B cell (primary cell): ENCODE measurements at regions of chr19 and their contacts with region 1.

Region 1: DNA sequence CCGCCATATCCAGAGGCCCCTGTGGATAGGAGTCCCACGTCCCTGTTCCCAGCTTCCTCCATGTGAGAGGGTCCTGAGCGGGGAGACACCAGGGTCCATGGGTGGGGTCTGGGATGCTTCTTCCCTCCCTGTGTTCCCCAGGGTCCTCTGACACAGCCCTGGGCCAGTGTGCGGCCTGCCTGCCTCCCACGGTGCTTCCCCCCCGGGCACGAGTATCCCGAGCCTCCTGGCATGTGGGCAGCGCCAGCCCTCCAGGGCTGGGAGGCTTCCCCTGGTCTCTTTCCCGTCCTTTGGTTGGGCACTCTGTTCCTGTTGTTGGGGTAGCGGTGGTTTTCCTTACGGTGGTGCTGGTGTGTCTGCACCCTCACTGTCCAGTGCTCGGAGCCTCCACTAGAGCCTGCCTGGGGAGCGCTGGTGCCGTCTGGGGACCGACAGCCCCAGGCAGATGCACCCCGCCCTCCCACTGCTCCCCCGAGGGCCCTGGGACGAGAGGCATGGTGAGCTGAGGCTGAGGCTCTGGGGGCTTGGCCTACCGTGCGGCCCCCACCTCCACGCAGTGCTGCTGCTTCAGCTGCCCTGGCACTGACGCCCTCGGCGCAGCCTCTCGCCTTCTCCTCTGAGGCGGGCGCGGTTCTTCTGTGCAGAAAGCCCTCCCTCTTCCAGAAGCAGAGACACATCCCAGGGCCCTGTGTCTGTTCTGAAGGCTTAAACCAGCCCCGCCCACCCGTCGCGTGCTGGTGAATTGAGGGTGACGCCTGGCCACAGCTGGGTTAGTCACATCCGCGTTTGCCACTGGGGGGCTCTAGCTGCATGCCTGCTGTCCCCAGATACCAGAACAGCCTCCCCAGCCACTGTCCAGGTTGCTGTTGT is 27.9 kb downstream of the PLEKHJ1 start:
- DNase-seq: peak; percentile 55
- ATAC-seq: peak; percentile 78
- H3K4me3 ChIP-seq: no peak overlapping the region
- H3K4me3 Mint-ChIP-seq: no peak overlapping the region
- H3K27ac ChIP-seq: no peak overlapping the region
- H3K27ac Mint-ChIP-seq: no peak overlapping the region
- H3K4me1 ChIP-seq: peaks cover 0 to 6% of the 10 kb centered on the region in 2 donors
- H3K4me1 Mint-ChIP-seq: peaks cover 5% of the 10 kb centered on the region
- H3K27me3 ChIP-seq: no peaks in the 10 kb centered on the region
- H3K27me3 Mint-ChIP-seq: no peaks in the 10 kb centered on the region
- CTCF ChIP-seq: no peak

Region 2: GRCh38 chr19:1987197-1988187 is 220.7 kb before region 1 on chr19:
- CTCF ChIA-PET with region 1: no interaction called
- POLR2A ChIA-PET with region 1: interaction called, 10 read pairs
- intact Hi-C with region 1: no loop called
- DNase-seq: no peak
- ATAC-seq: no peak
- H3K4me3 ChIP-seq: no peak overlapping the region
- H3K4me3 Mint-ChIP-seq: no peak overlapping the region
- H3K27ac ChIP-seq: no peak overlapping the region
- H3K27ac Mint-ChIP-seq: no peak overlapping the region
- H3K4me1 ChIP-seq: no peaks in the 10 kb centered on the region
- H3K4me1 Mint-ChIP-seq: no peaks in the 10 kb centered on the region
- H3K27me3 ChIP-seq: no peaks in the 10 kb centered on the region
- H3K27me3 Mint-ChIP-seq: no peaks in the 10 kb centered on the region
- CTCF ChIP-seq: no peak

Region 3: DNA sequence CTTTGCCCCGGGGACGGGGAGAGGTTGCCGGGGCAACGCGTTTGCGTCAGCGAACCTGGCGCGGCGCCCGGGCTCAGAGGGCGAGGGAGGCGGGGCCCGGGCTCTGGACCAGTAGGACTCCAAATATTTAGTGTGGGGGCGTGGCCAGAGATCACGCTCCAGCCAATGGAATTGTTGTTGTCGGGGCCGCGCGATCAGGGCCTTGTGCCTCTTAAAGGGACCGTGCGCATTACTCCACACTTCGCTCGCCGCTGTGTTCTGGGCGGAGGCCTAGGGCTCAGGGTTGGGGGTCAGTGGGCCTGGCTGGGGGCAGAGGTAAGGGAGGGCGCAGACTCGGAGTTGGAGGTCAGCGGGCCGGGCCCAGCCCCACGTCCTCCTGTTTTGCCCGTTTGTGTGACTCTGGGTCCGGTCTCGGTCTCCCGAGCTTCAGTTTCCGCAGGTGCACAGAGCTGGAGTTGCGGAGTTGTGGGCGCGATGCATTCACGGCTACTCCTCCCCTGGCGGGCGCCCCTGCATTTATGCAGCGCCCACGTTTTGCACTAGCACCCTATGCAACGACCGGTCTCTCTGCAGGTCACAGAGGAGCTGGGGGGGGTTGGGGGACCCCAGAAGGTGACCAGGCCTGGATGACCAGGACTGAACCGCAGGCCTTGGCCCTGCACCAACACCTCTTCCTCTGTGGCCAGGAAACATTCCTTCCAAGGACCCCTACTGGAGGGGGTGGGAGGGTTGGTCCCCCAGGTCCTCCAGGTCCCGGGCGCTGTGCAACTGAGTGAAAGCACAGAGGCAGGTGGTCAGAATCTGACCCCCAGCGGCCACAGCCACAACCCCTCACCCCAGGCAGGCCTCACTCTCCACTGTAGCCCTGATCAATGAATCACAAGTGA is 146.5 kb before region 1 on chr19:
- CTCF ChIA-PET with region 1: no interaction called
- POLR2A ChIA-PET with region 1: no interaction called
- intact Hi-C with region 1: no loop called
- DNase-seq: peak; percentile 99
- ATAC-seq: peak; percentile 92
- H3K4me3 ChIP-seq: peak overlapping the region; percentile 8 to 94 (median 84)
- H3K4me3 Mint-ChIP-seq: peak overlapping the region; percentile 95
- H3K27ac ChIP-seq: peak overlapping the region; percentile 92 to 97
- H3K27ac Mint-ChIP-seq: peak overlapping the region; percentile 95
- H3K4me1 ChIP-seq: peaks cover 30 to 67% of the 10 kb centered on the region in 2 donors
- H3K4me1 Mint-ChIP-seq: peaks cover 44% of the 10 kb centered on the region
- H3K27me3 ChIP-seq: no peaks in the 10 kb centered on the region
- H3K27me3 Mint-ChIP-seq: no peaks in the 10 kb centered on the region
- CTCF ChIP-seq: no peak